Activated CD4-positive, alpha-beta T cell treated with anti-CD3 and anti-CD28 coated beads for 36 hours (primary cell): ENCODE measurements at regions of chr16 and their contacts with region 1.

Region 1: DNA sequence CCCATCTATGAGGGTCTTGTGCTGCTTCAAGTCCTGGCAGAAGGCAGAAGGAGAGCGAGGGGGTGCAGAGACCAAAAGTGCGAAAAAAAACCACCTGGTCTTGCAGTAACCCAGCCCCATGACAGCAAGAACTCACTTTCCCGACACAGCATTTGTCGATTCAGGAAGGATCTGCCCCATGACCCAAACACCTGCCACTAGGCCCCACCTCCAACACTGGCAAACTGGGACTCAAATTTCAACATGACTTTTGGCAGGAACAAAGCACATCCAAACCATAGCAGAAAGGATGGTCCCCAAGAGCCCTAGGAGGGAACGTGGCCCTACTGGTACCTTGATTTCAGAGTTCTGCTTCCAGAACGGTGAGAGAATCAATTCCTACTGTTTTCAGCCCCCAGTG is 34.7 kb upstream of the KLHDC4 start:
- DNase-seq: no peak
- ATAC-seq: no peak
- H3K4me3 Mint-ChIP-seq: no peak overlapping the region
- H3K27ac Mint-ChIP-seq: no peak overlapping the region
- H3K4me1 Mint-ChIP-seq: no peaks in the 10 kb centered on the region
- H3K27me3 Mint-ChIP-seq: no peaks in the 10 kb centered on the region

Region 2: DNA sequence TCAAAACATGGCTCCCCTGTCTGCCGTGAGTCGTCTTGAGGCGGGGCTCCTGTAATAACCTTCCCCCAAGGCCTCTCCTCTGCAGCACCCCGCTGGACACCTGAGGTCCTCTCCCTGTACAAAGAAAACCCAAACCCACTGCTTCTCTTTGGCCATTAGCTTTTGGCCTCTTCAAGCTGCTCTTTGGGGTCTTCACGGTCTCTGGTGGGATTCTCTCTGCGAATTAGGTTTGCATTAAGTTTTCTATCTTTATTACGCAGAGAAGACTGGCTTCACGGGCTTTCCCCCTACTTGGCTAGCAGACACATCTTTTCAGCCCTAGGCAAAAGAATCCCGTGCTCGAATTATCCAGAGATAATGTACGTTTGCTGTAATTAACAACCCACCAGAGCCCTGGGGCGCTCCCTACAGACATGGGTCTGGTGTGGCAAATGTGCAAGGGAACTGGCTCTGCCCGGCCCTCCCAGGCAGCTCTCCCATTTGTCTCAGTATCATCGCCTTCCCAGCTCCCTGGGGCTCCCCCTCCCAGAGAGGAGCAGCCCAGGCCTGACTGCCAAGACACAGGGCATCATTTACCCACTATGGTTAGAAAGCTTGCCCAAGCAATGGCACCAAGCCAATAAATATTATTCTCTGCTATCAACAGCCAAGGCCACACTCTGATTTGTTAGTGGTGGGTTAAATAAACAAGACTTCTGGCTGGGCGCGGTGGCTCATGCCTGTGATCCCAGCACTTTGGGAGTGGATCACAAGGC is 10.0 kb before region 1 on chr16:
- CTCF ChIA-PET with region 1: interaction called, 3 read pairs
- POLR2A ChIA-PET with region 1: no interaction called
- intact Hi-C with region 1: loop called in 1 of 2 experiments (anchors 2 kb)
- DNase-seq: no peak
- ATAC-seq: no peak
- H3K4me3 Mint-ChIP-seq: no peak overlapping the region
- H3K27ac Mint-ChIP-seq: no peak overlapping the region
- H3K4me1 Mint-ChIP-seq: no peaks in the 10 kb centered on the region
- H3K27me3 Mint-ChIP-seq: no peaks in the 10 kb centered on the region